Ascending aorta (tissue), 2 donors: ENCODE measurements at regions of chr12 and their contacts with region 1.

Region 1: DNA sequence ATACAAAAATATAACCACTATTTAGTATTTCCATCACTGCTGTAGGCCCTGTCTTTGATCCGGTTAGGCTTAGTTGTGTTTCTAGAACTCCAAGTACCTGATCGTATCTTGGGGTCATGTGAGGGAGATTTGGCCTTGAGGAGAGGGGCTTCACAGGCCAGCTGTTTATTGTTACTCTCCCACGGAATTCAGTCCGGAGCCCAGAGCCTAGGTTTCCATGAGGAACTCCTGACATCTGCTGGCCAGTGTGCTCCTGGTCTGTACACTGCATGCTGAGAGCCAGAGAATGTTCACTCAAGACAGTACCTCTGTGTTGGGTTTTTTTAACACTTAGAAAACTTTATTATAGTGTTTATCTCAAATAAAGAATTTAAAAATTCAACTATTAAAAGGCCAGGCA is 341.0 kb upstream of the TMEM132C start:
- DNase-seq: peak in 1 of 2 donors; percentile 64
- H3K4me3 ChIP-seq: no peak overlapping the region
- H3K27ac ChIP-seq: no peak overlapping the region
- H3K4me1 ChIP-seq: peaks cover 15 to 27% of the 10 kb centered on the region in 2 donors
- H3K27me3 ChIP-seq: no peaks in the 10 kb centered on the region
- CTCF ChIP-seq: peak; percentile 50 to 74 (median 54)

Region 2: GRCh38 chr12:127108360-127109215 is 817.4 kb before region 1 on chr12:
- intact Hi-C with region 1: loop called (anchors 1 kb)
- DNase-seq: peak in 1 of 2 donors; percentile 66
- H3K4me3 ChIP-seq: no peak overlapping the region
- H3K27ac ChIP-seq: no peak overlapping the region
- H3K4me1 ChIP-seq: no peaks in the 10 kb centered on the region
- H3K27me3 ChIP-seq: no peaks in the 10 kb centered on the region
- CTCF ChIP-seq: peak; percentile 37 to 65 (median 43)

Region 3: GRCh38 chr12:127280393-127281275 is 645.3 kb before region 1 on chr12:
- intact Hi-C with region 1: loop called (anchors 5 kb)
- DNase-seq: no peak
- H3K4me3 ChIP-seq: no peak overlapping the region
- H3K27ac ChIP-seq: no peak overlapping the region
- H3K4me1 ChIP-seq: peaks cover 4 to 6% of the 10 kb centered on the region in 2 donors
- H3K27me3 ChIP-seq: no peaks in the 10 kb centered on the region
- CTCF ChIP-seq: peak; percentile 71 to 84 (median 76)

Region 4: GRCh38 chr12:127588249-127588648 is 337.7 kb before region 1 on chr12:
- intact Hi-C with region 1: loop called (anchors 5 kb)
- DNase-seq: peak; percentile 25 to 88
- H3K4me3 ChIP-seq: no peak overlapping the region
- H3K27ac ChIP-seq: peak overlapping the region; percentile 78 to 87
- H3K4me1 ChIP-seq: peaks cover 0 to 10% of the 10 kb centered on the region in 2 donors
- H3K27me3 ChIP-seq: no peaks in the 10 kb centered on the region
- CTCF ChIP-seq: no peak

Region 5: GRCh38 chr12:127640181-127640886 is 285.6 kb before region 1 on chr12:
- intact Hi-C with region 1: loop called (anchors 5 kb)
- DNase-seq: peak; percentile 14 to 86
- H3K4me3 ChIP-seq: peak overlapping the region in 1 of 2 donors; percentile 6
- H3K27ac ChIP-seq: peak overlapping the region; percentile 72 to 81
- H3K4me1 ChIP-seq: peaks cover 0 to 16% of the 10 kb centered on the region in 2 donors
- H3K27me3 ChIP-seq: no peaks in the 10 kb centered on the region
- CTCF ChIP-seq: no peak

Region 6: GRCh38 chr12:127822809-127823411 is 103.1 kb before region 1 on chr12:
- intact Hi-C with region 1: loop called (anchors 5 kb)
- DNase-seq: peak; percentile 63 to 76
- H3K4me3 ChIP-seq: no peak overlapping the region
- H3K27ac ChIP-seq: peak overlapping the region; percentile 71 to 83
- H3K4me1 ChIP-seq: no peaks in the 10 kb centered on the region
- H3K27me3 ChIP-seq: no peaks in the 10 kb centered on the region
- CTCF ChIP-seq: peak in 1 of 3 experiments; percentile 11

Region 7: DNA sequence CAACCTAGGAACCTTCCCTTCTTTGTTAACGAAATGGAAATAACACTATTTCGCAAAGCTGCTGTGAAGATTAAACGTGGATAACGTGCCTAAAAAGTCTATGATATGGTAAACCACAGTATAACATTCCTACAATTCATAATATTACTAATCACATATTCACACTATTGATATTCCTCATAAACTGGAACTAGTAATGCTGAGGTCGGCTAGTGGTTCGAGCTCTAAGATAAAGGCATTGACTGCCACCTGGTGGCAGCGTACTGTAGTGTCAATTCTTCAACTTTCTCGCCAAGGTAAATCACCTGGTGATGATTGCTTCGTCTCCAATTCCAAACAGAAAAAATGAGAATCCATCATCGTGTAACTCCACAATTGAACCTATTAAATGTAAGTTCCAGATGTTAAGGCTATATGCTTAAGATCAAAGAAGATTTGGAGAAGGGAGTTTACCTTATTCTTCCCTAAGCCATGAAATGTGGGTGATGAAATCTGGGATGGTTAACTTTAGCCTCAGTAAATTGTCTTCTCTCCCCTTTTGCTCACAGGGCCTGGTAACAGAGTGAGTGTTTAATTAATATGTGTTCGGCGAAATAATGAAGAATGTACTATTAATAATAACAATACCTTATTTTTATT is 143.5 kb after region 1 on chr12:
- intact Hi-C with region 1: loop called (anchors 2 kb)
- DNase-seq: no peak
- H3K4me3 ChIP-seq: no peak overlapping the region
- H3K27ac ChIP-seq: no peak overlapping the region
- H3K4me1 ChIP-seq: no peaks in the 10 kb centered on the region
- H3K27me3 ChIP-seq: no peaks in the 10 kb centered on the region
- CTCF ChIP-seq: peak in 2 of 3 experiments; percentile 65 to 66

Region 8: GRCh38 chr12:128083132-128083729 is 157.3 kb after region 1 on chr12:
- intact Hi-C with region 1: no loop called
- DNase-seq: no peak
- H3K4me3 ChIP-seq: no peak overlapping the region
- H3K27ac ChIP-seq: no peak overlapping the region
- H3K4me1 ChIP-seq: no peaks in the 10 kb centered on the region
- H3K27me3 ChIP-seq: no peaks in the 10 kb centered on the region
- CTCF ChIP-seq: no peak

Region 9: DNA sequence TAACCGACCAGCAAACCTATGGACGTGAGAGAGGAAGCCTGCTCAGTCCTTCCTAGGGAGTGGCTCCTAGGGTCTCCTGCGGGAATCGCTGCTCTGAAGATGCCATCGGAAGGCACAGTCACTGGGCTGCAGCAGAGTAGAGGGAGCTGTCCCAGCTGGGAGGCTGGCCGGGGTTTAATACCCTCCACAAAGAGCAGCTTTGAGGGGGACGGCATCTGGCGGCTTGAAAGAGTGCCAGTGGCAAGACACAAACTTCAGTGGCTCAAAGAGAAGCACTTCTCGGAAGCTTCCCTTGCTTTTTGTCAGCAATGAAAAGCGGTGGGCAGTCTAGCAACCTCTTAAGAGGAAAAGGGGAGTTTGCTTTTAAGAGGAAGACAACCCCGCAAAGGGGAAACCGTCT is 455.6 kb after region 1 on chr12:
- intact Hi-C with region 1: no loop called
- DNase-seq: no peak
- H3K4me3 ChIP-seq: no peak overlapping the region
- H3K27ac ChIP-seq: no peak overlapping the region
- H3K4me1 ChIP-seq: no peaks in the 10 kb centered on the region
- H3K27me3 ChIP-seq: no peaks in the 10 kb centered on the region
- CTCF ChIP-seq: no peak